ENCODE measurements at regions of chr5 and their contacts with region 1.

Region 1: DNA sequence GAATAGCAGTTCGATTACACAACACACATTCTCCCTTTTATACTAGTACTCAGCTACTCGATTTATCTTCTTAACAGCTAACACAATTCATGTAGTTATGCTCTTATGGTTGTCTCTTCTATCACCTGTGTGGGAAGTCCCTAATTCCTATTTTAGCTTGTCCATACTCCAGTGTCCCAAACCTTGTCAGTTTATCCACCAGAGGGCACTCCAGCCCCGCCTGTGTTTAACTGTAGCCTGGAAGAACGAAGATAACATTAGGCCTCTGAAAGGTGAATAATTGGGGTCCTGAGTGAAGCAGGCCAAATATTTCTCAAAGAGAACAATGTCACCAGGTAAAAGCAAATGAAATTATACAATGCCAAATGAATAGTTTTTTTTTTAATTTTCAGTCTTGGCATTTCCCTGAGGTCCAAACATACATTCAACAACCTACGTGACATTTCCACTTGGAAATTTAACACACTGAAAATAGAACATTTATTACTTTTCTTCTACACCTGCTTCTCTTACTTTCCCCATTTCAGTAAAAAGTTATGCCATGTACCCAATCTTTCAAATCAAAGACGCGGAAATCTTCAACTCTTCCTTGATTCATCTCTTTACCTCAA is 560.7 kb downstream of the HTR1A start:
- DNase-seq: no peak
- ATAC-seq: no peak
- H3K4me3 ChIP-seq: no peak overlapping the region
- H3K27ac ChIP-seq: no peak overlapping the region
- H3K4me1 ChIP-seq: no peaks in the 10 kb centered on the region
- H3K27me3 ChIP-seq: no peaks in the 10 kb centered on the region
- CTCF ChIP-seq: peak in 2 of 5 experiments; percentile 38 to 47
- POLR2A ChIP-seq: no peak

Region 2: GRCh38 chr5:63053019-63053638 is 348.4 kb before region 1 on chr5:
- in situ Hi-C with region 1: no loop called
- intact Hi-C with region 1: no loop called
- DNase-seq: peak; percentile 15 to 44
- ATAC-seq: peak; percentile 63 to 72
- H3K4me3 ChIP-seq: no peak overlapping the region
- H3K27ac ChIP-seq: no peak overlapping the region
- H3K4me1 ChIP-seq: no peaks in the 10 kb centered on the region
- H3K27me3 ChIP-seq: no peaks in the 10 kb centered on the region
- CTCF ChIP-seq: no peak
- POLR2A ChIP-seq: no peak

Region 3: DNA sequence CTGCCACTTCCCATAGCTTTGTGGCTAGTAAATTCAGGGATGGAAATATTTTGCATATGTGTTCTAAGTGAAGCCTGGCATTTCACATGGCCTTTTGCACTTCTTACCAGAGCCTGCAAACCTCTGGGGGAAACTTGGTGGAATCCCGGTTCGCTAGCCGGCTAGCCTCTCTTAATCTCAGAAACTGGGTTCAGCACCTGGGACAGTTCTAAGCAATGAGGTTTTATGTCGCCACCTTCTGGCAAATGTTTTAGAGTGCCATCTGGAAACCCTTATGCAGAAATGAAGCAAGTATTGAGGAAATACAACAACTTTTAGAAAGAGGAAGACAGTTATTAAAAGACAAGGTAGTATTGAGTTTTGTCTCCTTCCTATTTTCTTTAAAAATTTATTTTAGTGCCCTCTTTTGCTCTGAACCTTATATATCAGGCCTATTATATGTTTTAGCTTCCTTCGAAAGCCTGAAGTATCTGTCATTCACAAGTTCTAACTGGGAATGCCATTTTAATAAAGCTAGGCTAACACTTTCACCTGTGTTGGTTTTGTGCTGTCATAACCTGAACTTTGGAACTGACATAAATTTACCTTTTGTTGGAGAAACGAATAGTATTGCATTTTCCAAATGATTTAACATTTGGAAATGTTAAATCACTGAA is 561.7 kb after region 1 on chr5:
- in situ Hi-C with region 1: no loop called
- intact Hi-C with region 1: loop called (anchors 10 kb)
- DNase-seq: no peak
- ATAC-seq: no peak
- H3K4me3 ChIP-seq: no peak overlapping the region
- H3K27ac ChIP-seq: no peak overlapping the region
- H3K4me1 ChIP-seq: no peaks in the 10 kb centered on the region
- H3K27me3 ChIP-seq: peaks cover 29 to 38% (median 30%) of the 10 kb centered on the region in 3 donors
- CTCF ChIP-seq: peak in 1 of 5 experiments; percentile 27
- POLR2A ChIP-seq: no peak